MCF 10A (cell line): ENCODE measurements at regions of chr16 and their contacts with region 1.

Region 1: GRCh38 chr16:68590201-68590994 is 51.3 kb downstream of the ZFP90 start:
- DNase-seq: peak; percentile 79
- H3K4me3 Mint-ChIP-seq: no peak overlapping the region
- H3K27ac Mint-ChIP-seq: no peak overlapping the region
- H3K4me1 Mint-ChIP-seq: peaks cover 6% of the 10 kb centered on the region
- H3K27me3 Mint-ChIP-seq: no peaks in the 10 kb centered on the region
- CTCF ChIP-seq: peak; percentile 98

Region 2: DNA sequence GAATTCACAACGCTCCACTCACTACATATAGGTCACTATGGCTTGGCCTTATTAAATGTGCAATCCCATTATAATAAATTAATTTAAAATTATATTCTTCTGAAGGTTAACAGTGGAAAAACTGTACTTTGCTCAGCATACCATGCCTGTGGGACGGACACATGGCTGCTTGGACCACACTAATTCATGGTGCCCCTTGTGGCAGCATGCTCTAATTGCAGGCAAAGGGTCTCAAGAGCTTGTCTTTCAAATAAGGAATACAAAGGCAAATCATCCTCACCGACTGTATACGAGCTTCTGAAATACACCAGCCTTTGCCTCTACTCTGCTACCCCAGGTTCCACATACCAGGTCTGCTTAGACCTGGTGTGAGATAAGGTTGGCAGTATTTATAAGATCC is 153.8 kb before region 1 on chr16:
- CTCF ChIA-PET with region 1: no interaction called
- POLR2A ChIA-PET with region 1: no interaction called
- intact Hi-C with region 1: no loop called
- DNase-seq: peak; percentile 12
- H3K4me3 Mint-ChIP-seq: no peak overlapping the region
- H3K27ac Mint-ChIP-seq: no peak overlapping the region
- H3K4me1 Mint-ChIP-seq: no peaks in the 10 kb centered on the region
- H3K27me3 Mint-ChIP-seq: peaks cover 38% of the 10 kb centered on the region
- CTCF ChIP-seq: peak; percentile 23

Region 3: GRCh38 chr16:68575082-68575481 is 15.3 kb before region 1 on chr16:
- CTCF ChIA-PET with region 1: interaction called, 24 read pairs
- POLR2A ChIA-PET with region 1: interaction called, 6 read pairs
- intact Hi-C with region 1: no loop called
- DNase-seq: peak; percentile 11
- H3K4me3 Mint-ChIP-seq: no peak overlapping the region
- H3K27ac Mint-ChIP-seq: no peak overlapping the region
- H3K4me1 Mint-ChIP-seq: no peaks in the 10 kb centered on the region
- H3K27me3 Mint-ChIP-seq: no peaks in the 10 kb centered on the region
- CTCF ChIP-seq: no peak

Region 4: GRCh38 chr16:68644715-68645493 is 54.5 kb after region 1 on chr16 and contains the start of gene CDH3:
- CTCF ChIA-PET with region 1: interaction called, 15 read pairs
- POLR2A ChIA-PET with region 1: interaction called, 18 read pairs
- intact Hi-C with region 1: loop called (anchors 5 kb)
- DNase-seq: peak; percentile 88
- H3K4me3 Mint-ChIP-seq: peak within 1 kb of the TSS; percentile 89
- H3K27ac Mint-ChIP-seq: peak within 1 kb of the TSS; percentile 75
- H3K4me1 Mint-ChIP-seq: peaks cover 21% of the 10 kb centered on the region
- H3K27me3 Mint-ChIP-seq: no peaks in the 10 kb centered on the region
- CTCF ChIP-seq: no peak
- total RNA-seq, gene CDH3: 74.4 and 107 TPM in 2 replicates

Region 5: DNA sequence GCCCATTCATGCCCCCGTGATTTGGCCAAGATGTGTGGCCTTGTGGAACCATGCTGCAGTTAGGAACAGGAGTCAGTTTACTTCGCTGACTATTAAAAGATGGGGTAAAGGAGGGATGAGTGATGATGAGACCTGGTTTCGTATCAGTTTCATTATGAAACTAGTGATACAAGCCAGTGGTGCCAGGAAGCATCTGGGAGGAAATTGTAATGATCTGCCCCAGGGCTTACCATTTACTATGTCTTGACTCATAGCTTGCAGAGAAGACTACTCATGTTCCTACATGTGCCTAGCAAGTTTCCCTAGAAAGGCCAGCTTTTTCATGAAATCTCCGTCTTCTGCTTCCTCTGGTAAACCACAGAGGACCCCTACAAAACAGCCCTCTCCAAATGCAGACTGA is 77.9 kb after region 1 on chr16:
- CTCF ChIA-PET with region 1: interaction called, 60 read pairs
- POLR2A ChIA-PET with region 1: interaction called, 23 read pairs
- intact Hi-C with region 1: no loop called
- DNase-seq: peak; percentile 95
- H3K4me3 Mint-ChIP-seq: peak overlapping the region; percentile 48
- H3K27ac Mint-ChIP-seq: peak overlapping the region; percentile 92
- H3K4me1 Mint-ChIP-seq: peaks cover 36% of the 10 kb centered on the region
- H3K27me3 Mint-ChIP-seq: no peaks in the 10 kb centered on the region
- CTCF ChIP-seq: no peak

Region 6: DNA sequence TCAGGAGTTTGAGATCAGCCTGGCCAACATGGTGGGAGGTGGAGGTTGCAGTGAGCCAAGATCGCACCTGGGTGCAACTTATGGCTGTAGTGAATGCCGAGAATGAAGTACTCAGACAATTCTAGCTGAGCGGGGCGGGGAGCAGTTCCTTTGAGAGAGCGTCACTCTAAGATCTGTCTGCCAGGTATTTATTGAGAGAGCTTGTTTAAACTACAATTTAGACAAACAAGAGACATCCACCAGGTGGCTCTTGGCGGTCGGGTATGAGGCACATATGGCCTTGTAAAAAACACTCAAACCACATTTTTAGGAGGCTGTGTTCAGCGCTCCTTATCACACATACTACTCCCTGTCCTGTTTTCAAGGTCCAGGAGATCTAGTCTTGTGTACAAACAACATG is 106.1 kb after region 1 on chr16:
- CTCF ChIA-PET with region 1: interaction called, 22 read pairs
- POLR2A ChIA-PET with region 1: interaction called, 5 read pairs
- intact Hi-C with region 1: no loop called
- DNase-seq: no peak
- H3K4me3 Mint-ChIP-seq: no peak overlapping the region
- H3K27ac Mint-ChIP-seq: no peak overlapping the region
- H3K4me1 Mint-ChIP-seq: peaks cover 6% of the 10 kb centered on the region
- H3K27me3 Mint-ChIP-seq: no peaks in the 10 kb centered on the region
- CTCF ChIP-seq: no peak

Region 7: DNA sequence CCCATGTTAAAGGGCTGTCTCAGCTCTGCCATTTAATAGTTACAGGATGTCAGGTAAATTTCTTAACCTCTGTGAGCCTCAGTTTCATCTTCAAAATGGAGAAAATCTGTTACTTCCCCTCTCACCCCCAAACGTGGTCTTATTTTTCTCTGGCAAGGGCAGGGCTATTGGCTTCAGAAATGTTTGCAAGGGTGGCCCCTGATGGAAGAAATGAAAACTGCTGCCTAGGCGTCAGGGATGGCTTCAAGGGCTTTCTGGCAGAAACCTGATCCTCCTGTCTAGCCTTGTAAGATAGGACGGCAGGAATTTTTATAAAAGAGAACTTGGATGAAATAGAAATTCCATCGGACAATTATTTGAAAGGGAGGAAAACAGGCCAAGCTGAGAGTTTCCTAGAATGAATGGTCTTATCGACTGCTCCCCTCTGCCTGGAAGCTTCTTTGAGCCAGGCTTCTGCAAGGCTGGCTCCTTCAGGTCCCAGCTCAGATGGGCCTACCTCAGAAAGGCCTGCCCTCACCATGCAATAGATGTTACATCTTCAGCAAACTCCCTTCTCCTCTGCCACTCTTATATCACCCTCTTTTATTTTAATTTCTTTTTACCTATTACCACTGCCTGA is 210.0 kb after region 1 on chr16:
- CTCF ChIA-PET with region 1: interaction called, 64 read pairs
- POLR2A ChIA-PET with region 1: interaction called, 11 read pairs
- intact Hi-C with region 1: loop called (anchors 2 kb)
- DNase-seq: peak; percentile 83
- H3K4me3 Mint-ChIP-seq: no peak overlapping the region
- H3K27ac Mint-ChIP-seq: no peak overlapping the region
- H3K4me1 Mint-ChIP-seq: peaks cover 21% of the 10 kb centered on the region
- H3K27me3 Mint-ChIP-seq: no peaks in the 10 kb centered on the region
- CTCF ChIP-seq: peak; percentile 73